CD4-positive, alpha-beta memory T cell (primary cell): ENCODE measurements at regions of chr16 and their contacts with region 1.

Region 1: GRCh38 chr16:18816286-18816685 is 14.9 kb upstream of the ARL6IP1 start:
- DNase-seq: no peak
- H3K4me3 ChIP-seq: no peak overlapping the region
- H3K4me3 Mint-ChIP-seq: no peak overlapping the region
- H3K27ac ChIP-seq: no peak overlapping the region
- H3K27ac Mint-ChIP-seq: no peak overlapping the region
- H3K4me1 ChIP-seq: peaks cover 15% of the 10 kb centered on the region
- H3K4me1 Mint-ChIP-seq: peaks cover 5 to 18% (median 11%) of the 10 kb centered on the region in 4 donors
- H3K27me3 ChIP-seq: no peaks in the 10 kb centered on the region
- H3K27me3 Mint-ChIP-seq: no peaks in the 10 kb centered on the region

Region 2: GRCh38 chr16:18829251-18829650 is 13.0 kb after region 1 on chr16:
- CTCF ChIA-PET with region 1: interaction called, 12 read pairs
- POLR2A ChIA-PET with region 1: interaction called, 3 read pairs
- intact Hi-C with region 1: no loop called
- DNase-seq: no peak
- H3K4me3 ChIP-seq: no peak overlapping the region
- H3K4me3 Mint-ChIP-seq: no peak overlapping the region
- H3K27ac ChIP-seq: no peak overlapping the region
- H3K27ac Mint-ChIP-seq: peak overlapping the region in 1 of 7 donors; percentile 6
- H3K4me1 ChIP-seq: no peaks in the 10 kb centered on the region
- H3K4me1 Mint-ChIP-seq: no peaks in the 10 kb centered on the region
- H3K27me3 ChIP-seq: no peaks in the 10 kb centered on the region
- H3K27me3 Mint-ChIP-seq: no peaks in the 10 kb centered on the region